ENCODE measurements at regions of chr1 and their contacts with region 1.

Region 1: GRCh38 chr1:159798893-159799292 is 3.3 kb upstream of the FCRL6 start:
- DNase-seq: peak; percentile 51
- H3K4me3 Mint-ChIP-seq: no peak overlapping the region
- H3K27ac Mint-ChIP-seq: no peak overlapping the region
- H3K4me1 Mint-ChIP-seq: peaks cover 18% of the 10 kb centered on the region
- H3K27me3 Mint-ChIP-seq: peaks cover 43% of the 10 kb centered on the region

Region 2: GRCh38 chr1:159881930-159882839 is 83.3 kb after region 1 on chr1:
- CTCF ChIA-PET with region 1: interaction called, 10 read pairs
- POLR2A ChIA-PET with region 1: no interaction called
- DNase-seq: no peak
- H3K4me3 Mint-ChIP-seq: no peak overlapping the region
- H3K27ac Mint-ChIP-seq: no peak overlapping the region
- H3K4me1 Mint-ChIP-seq: no peaks in the 10 kb centered on the region
- H3K27me3 Mint-ChIP-seq: no peaks in the 10 kb centered on the region

Measured in activated CD4-positive, alpha-beta T cell treated with anti-CD3 and anti-CD28 coated beads, Interleukin-2, amount 10 ng/mL, durations not matched to agents 7 days and 5 days (primary cell).